Heart left ventricle (tissue), 16 donors: ENCODE measurements at regions of chr17 and their contacts with region 1.

Region 1: GRCh38 chr17:42609182-42609813 is at the starts of genes RETREG3 and TUBG1:
- DNase-seq: peak; percentile 99 to 100 (median 99)
- ATAC-seq: peak; percentile 97 to 99 (median 98)
- H3K4me3 ChIP-seq: peak within 1 kb of the TSS; percentile 62 to 96 (median 88)
- H3K27ac ChIP-seq: peak within 1 kb of the TSS; percentile 82 to 97 (median 94)
- H3K4me1 ChIP-seq: peaks cover 3 to 48% (median 36%) of the 10 kb centered on the region in 12 donors
- H3K27me3 ChIP-seq: no peaks in the 10 kb centered on the region
- CTCF ChIP-seq: peak in 7 of 12 donors; percentile 17 to 51 (median 35)
- POLR2A ChIP-seq: peak; percentile 18 to 93
- total RNA-seq, gene RETREG3: 21.3 to 39.0 (median 28.3) TPM
- total RNA-seq, gene TUBG1: 31.5 to 80.1 (median 49.3) TPM

Region 2: GRCh38 chr17:42586514-42587230 is 22.6 kb before region 1 on chr17:
- intact Hi-C with region 1: no loop called
- DNase-seq: no peak
- ATAC-seq: no peak
- H3K4me3 ChIP-seq: no peak overlapping the region
- H3K27ac ChIP-seq: peak overlapping the region in 2 of 12 donors; percentile 1 to 65
- H3K4me1 ChIP-seq: peaks cover 0 to 36% (median 10%) of the 10 kb centered on the region in 12 donors
- H3K27me3 ChIP-seq: no peaks in the 10 kb centered on the region
- CTCF ChIP-seq: no peak
- POLR2A ChIP-seq: no peak

Region 3: GRCh38 chr17:42653179-42654124 is 44.2 kb after region 1 on chr17:
- intact Hi-C with region 1: loop called in 1 of 10 experiments (anchors 5 kb)
- DNase-seq: peak; percentile 61 to 81 (median 72)
- ATAC-seq: peak; percentile 57 to 83 (median 80)
- H3K4me3 ChIP-seq: peak overlapping the region in 11 of 12 donors; percentile 17 to 60 (median 47)
- H3K27ac ChIP-seq: peak overlapping the region; percentile 36 to 90 (median 74)
- H3K4me1 ChIP-seq: peaks cover 0 to 17% (median 10%) of the 10 kb centered on the region in 12 donors
- H3K27me3 ChIP-seq: peaks cover 0 to 8% (median 0%) of the 10 kb centered on the region in 9 donors
- CTCF ChIP-seq: no peak
- POLR2A ChIP-seq: no peak

Region 4: GRCh38 chr17:42677008-42677857 is 67.9 kb after region 1 on chr17:
- intact Hi-C with region 1: loop called in 9 of 10 experiments (anchors 1 to 10 kb)
- DNase-seq: peak; percentile 100
- ATAC-seq: peak; percentile 70 to 87 (median 82)
- H3K4me3 ChIP-seq: peak overlapping the region; percentile 79 to 97 (median 92)
- H3K27ac ChIP-seq: peak overlapping the region; percentile 66 to 99 (median 96)
- H3K4me1 ChIP-seq: peaks cover 2 to 81% (median 65%) of the 10 kb centered on the region in 12 donors
- H3K27me3 ChIP-seq: peaks cover 0 to 35% (median 0%) of the 10 kb centered on the region in 9 donors
- CTCF ChIP-seq: no peak
- POLR2A ChIP-seq: no peak

Region 5: GRCh38 chr17:42760652-42761581 is 151.6 kb after region 1 on chr17 and contains the start of gene RAMP2:
- intact Hi-C with region 1: loop called in 1 of 10 experiments (anchors 10 kb)
- DNase-seq: peak in 3 of 5 donors; percentile 58 to 63 (median 60)
- ATAC-seq: peak in 3 of 4 donors; percentile 12 to 56 (median 52)
- H3K4me3 ChIP-seq: peak within 1 kb of the TSS; percentile 44 to 92 (median 70)
- H3K27ac ChIP-seq: peak within 1 kb of the TSS; percentile 78 to 98 (median 90)
- H3K4me1 ChIP-seq: peaks cover 3 to 36% (median 16%) of the 10 kb centered on the region in 12 donors
- H3K27me3 ChIP-seq: peaks cover 0 to 27% (median 2%) of the 10 kb centered on the region in 9 donors
- CTCF ChIP-seq: no peak
- POLR2A ChIP-seq: peak in 1 of 2 donors; percentile 45
- total RNA-seq, gene RAMP2: 31.2 to 58.3 (median 39.7) TPM